Uterus (tissue), 4 donors: ENCODE measurements at regions of chr1 and their contacts with region 1.

Region 1: DNA sequence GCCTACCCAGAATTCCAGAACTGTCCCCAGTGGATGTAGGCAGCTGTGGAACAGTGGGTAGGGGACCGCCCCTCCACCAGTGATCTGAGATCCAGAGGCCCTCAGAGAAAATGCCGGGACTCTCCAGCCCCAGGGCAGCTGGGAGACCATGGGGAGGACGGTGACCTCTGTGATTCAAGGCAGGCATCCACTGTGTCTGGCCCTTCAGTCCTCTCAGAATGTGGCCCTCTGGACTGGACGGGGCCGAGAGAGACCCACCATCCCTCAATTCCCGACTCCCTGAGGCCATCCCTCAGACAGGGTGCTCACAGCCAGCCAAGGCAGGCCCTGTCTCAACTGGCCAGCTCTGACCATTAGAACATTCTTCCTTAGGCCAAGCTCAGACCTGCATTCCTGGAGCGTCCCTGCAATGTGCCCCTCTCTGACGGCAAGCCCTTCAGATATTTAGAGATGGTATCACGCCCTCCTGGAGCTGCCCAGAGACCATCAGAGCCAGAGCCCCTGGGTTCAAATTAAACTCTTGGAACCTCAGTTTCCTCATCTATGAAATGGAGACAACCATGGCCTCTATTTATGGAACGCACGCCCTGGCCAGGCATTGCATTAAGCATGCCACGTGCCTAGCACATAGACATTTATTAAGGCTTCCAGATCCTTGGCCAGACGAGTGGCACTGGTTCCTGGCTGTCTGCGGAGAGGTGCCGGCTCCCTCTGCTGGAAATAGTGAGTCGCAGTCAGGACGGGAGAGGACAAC is 9.6 kb upstream of the EPS8L3 start:
- DNase-seq: peak; percentile 77 to 86
- H3K4me3 ChIP-seq: no peak overlapping the region
- H3K27ac ChIP-seq: no peak overlapping the region
- H3K4me1 ChIP-seq: no peaks in the 10 kb centered on the region
- H3K27me3 ChIP-seq: no peaks in the 10 kb centered on the region
- CTCF ChIP-seq: peak; percentile 81 to 89 (median 86)
- POLR2A ChIP-seq: no peak

Region 2: GRCh38 chr1:109643385-109644230 is 129.7 kb before region 1 on chr1:
- intact Hi-C with region 1: loop called (anchors 5 kb)
- DNase-seq: peak; percentile 75 to 80
- H3K4me3 ChIP-seq: no peak overlapping the region
- H3K27ac ChIP-seq: peak overlapping the region in 1 of 2 donors; percentile 30
- H3K4me1 ChIP-seq: no peaks in the 10 kb centered on the region
- H3K27me3 ChIP-seq: no peaks in the 10 kb centered on the region
- CTCF ChIP-seq: peak; percentile 70 to 82 (median 74)
- POLR2A ChIP-seq: no peak

Region 3: DNA sequence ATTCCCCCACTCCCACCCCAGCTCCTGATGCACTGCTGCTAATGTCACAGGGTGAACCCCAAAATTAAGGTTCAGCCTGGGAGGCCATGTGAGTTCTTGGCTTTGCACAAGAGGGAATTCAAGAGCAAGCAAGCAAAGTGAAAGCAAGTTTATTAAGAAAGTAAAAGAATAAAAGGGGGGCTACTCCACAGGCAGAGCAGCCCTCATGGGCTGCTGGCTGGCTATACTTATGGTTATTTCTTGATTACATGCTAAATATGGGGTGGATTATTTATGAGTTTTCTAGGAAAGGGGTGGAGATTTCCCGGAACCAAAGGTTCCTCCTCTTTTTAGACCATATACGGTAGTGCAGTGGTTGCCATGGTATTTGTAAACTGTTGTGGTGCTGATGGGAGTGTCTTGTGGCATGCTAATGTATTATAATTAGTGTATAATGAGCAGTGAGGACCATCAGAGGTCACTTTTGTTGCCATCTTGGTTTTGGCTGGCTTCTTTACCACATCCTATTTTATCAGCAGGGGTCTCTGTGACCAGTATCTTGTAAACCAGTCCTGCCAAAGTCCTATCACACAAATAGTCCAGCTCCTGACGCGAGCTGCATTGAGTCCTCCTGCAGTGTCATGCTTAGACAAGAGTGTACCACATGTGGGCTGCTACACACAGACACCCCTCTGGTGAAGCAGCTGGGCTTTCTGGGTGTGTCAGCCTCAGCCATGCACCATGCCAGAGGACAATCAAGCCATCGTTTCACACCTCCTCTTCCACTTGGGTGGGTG is 90.9 kb after region 1 on chr1:
- intact Hi-C with region 1: no loop called
- DNase-seq: no peak
- H3K4me3 ChIP-seq: no peak overlapping the region
- H3K27ac ChIP-seq: peak overlapping the region; percentile 50 to 59
- H3K4me1 ChIP-seq: no peaks in the 10 kb centered on the region
- H3K27me3 ChIP-seq: no peaks in the 10 kb centered on the region
- CTCF ChIP-seq: no peak
- POLR2A ChIP-seq: no peak